CD8-positive, alpha-beta T cell (primary cell): ENCODE measurements at regions of chr6 and their contacts with region 1.

Region 1: DNA sequence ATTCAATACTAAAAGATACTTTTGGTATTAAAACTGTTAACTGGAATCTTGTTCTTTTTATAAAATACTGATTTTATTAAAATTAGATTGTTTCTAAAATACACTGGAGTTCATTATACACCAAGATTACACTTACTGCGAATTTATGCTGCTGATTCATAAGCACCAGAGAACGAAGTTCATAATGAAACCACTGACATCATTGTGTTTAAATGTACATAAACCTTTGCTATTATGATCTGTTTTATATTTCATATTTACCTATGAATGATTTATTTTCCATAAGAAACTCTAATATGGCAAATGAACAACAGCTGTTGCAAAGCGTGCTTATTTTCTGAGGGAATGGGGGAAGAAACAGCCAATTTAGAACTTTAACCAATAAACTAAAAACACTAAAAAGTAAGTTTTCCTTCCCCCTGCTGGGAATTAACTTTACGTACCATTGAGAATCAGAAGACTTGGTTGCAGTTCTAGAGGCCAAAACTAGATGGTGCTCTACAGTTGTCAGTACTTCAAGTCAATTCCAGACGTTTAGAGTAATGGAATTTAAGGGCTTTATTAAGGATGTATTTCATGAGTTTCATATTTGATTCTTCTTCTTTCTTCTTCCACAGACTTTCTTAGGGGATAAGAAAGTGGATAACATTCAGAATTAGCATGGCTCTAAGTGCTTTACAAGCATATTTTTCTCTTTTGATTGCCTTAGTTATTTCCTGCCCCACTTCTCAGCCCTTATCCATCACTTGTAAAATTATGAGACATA is 30.8 kb upstream of the COL19A1 start:
- DNase-seq: peak in 2 of 9 experiments; percentile 54 to 64
- ATAC-seq: peak; percentile 75
- H3K4me3 ChIP-seq: no peak overlapping the region
- H3K4me3 Mint-ChIP-seq: no peak overlapping the region
- H3K27ac ChIP-seq: no peak overlapping the region
- H3K27ac Mint-ChIP-seq: no peak overlapping the region
- H3K4me1 ChIP-seq: no peaks in the 10 kb centered on the region
- H3K4me1 Mint-ChIP-seq: peaks cover 5% of the 10 kb centered on the region
- H3K27me3 ChIP-seq: peaks cover 0 to 3% of the 10 kb centered on the region in 2 experiments
- H3K27me3 Mint-ChIP-seq: peaks cover 13% of the 10 kb centered on the region
- CTCF ChIP-seq: peak; percentile 85

Region 2: DNA sequence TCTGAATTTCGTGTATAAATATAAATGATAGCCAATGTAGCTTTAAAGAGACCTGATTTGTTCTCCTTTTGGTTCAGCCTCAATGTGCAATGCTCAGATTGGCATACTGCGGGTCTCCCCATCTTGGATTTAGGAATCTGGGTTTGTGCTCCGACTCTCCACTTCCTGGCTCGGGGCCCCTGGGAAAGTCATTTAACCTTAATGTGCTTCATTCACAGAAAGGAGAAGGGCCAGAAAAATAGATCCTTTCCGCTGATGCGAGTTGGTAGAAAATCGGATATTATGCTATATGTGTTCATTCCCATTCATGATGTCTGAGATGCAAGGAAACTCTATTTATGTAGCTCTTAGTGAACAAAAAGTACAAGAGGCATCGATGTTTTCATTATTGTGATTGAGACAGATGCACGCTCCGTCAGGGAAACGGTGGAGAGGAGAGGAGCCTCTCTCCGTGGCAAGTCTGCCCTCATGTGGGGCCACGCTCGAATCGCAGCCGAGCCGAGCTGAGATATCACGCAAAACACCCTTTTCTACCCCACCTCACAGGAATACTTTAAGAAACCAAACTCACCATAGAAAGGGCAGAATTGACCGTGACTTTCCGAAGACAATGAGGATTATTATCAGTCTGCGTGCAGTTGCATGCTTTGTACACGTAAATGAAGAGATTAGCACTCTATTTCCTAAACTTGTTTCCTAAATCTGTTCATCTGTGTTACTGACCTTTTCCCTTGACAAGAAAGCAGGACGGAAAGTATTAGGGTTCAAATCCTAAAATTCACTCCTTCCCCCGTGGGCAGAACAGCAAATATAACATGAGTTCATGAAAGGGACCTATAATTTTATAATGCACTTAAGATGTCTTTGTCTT is 330.7 kb after region 1 on chr6:
- CTCF ChIA-PET with region 1: no interaction called
- POLR2A ChIA-PET with region 1: no interaction called
- intact Hi-C with region 1: loop called (anchors 2 to 10 kb)
- DNase-seq: peak in 5 of 9 experiments; percentile 3 to 17 (median 5)
- ATAC-seq: no peak
- H3K4me3 ChIP-seq: no peak overlapping the region
- H3K4me3 Mint-ChIP-seq: no peak overlapping the region
- H3K27ac ChIP-seq: no peak overlapping the region
- H3K27ac Mint-ChIP-seq: no peak overlapping the region
- H3K4me1 ChIP-seq: no peaks in the 10 kb centered on the region
- H3K4me1 Mint-ChIP-seq: peaks cover 6% of the 10 kb centered on the region
- H3K27me3 ChIP-seq: peaks cover 0 to 5% of the 10 kb centered on the region in 2 experiments
- H3K27me3 Mint-ChIP-seq: peaks cover 26% of the 10 kb centered on the region
- CTCF ChIP-seq: no peak